ENCODE measurements at regions of chr10 and their contacts with region 1.

Region 1: DNA sequence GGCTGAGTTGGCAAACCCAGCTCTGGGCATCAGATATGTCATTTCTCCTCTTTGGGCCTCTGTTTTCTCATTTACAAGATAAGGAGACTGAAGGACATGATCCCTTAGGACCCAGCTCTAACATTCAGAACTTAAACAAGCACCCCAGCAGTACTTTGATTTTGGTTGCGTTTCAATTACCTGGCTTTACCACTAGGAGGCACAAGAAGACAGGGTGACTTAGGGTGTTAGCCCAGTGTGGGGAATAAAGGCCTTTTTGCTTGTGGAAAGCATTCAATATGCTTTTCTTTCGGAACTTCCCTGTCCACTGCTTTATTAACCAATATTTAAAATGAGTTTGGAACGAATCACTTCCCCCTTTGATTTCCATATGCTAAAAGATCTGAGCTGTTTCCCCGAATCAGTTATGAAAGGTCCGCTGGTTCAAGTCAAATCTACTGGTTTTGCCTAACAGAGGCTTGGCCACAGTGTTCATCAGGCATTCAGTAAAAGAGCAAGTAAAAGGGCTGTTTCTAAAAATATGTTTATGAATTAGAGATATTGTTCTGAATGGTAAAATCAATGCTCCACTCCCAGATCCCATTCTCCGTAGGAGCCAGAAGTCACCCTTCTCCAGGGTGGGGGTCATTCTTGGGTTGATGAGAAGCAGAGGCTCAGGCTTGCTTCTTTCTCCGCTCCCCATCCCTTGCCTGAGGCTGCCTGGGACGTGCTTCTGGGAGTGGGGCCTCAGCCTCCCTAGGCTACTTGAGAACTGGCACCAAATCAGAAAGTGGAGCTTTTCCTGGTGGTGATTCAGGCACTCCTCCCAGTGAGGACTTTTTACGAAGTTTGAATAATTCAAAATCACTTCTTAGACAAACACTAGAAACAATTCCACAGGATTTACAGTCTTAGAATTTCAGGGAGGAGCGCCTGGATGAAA is 105.5 kb downstream of the MYOF start:
- DNase-seq: peak; percentile 42
- H3K4me3 Mint-ChIP-seq: no peak overlapping the region
- H3K27ac Mint-ChIP-seq: no peak overlapping the region
- H3K4me1 Mint-ChIP-seq: peaks cover 39% of the 10 kb centered on the region
- H3K27me3 Mint-ChIP-seq: no peaks in the 10 kb centered on the region

Region 2: GRCh38 chr10:93363891-93364648 is 12.6 kb before region 1 on chr10:
- CTCF ChIA-PET with region 1: interaction called, 27 read pairs
- POLR2A ChIA-PET with region 1: no interaction called
- DNase-seq: no peak
- H3K4me3 Mint-ChIP-seq: no peak overlapping the region
- H3K27ac Mint-ChIP-seq: no peak overlapping the region
- H3K4me1 Mint-ChIP-seq: peaks cover 18% of the 10 kb centered on the region
- H3K27me3 Mint-ChIP-seq: no peaks in the 10 kb centered on the region

Region 3: DNA sequence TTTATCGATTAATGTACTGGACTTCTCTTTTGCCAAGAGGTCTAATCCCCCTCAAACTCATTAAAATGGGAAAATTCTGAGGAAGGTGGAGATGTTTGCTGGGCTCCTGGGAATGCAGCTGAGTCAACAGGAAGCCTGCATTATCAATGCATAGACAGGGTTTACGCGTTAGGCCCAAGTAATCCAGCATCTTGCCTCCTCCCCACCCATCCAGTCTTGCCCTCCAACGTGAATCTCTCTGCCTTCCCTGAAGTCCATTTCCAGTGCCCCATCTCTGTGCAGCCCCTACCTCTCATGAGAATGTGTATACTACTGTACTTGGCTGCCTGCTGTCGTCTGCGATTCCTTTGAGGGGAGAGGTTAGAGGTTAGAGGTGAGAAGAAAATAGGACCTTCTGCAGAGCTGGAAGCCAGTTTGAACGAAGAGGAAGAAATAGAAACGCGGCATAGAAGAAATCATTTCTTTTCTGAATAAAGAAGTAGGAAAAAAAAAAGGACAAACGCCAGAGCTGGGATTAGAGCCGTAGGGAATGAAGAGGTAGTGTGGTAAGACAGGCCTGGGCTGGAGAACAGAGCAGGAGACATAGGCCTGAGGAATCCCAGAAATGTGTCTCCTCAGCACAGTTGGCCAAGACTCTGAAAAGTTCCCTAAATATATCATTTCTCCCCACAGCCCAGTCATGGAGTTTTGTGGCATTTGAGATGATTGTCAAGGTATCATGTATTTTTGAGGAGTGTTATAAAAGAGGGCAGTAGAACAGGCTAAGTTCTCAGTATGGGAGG is 29.9 kb after region 1 on chr10:
- CTCF ChIA-PET with region 1: interaction called, 22 read pairs
- POLR2A ChIA-PET with region 1: interaction called, 16 read pairs
- DNase-seq: no peak
- H3K4me3 Mint-ChIP-seq: no peak overlapping the region
- H3K27ac Mint-ChIP-seq: no peak overlapping the region
- H3K4me1 Mint-ChIP-seq: peaks cover 19% of the 10 kb centered on the region
- H3K27me3 Mint-ChIP-seq: no peaks in the 10 kb centered on the region

Region 4: DNA sequence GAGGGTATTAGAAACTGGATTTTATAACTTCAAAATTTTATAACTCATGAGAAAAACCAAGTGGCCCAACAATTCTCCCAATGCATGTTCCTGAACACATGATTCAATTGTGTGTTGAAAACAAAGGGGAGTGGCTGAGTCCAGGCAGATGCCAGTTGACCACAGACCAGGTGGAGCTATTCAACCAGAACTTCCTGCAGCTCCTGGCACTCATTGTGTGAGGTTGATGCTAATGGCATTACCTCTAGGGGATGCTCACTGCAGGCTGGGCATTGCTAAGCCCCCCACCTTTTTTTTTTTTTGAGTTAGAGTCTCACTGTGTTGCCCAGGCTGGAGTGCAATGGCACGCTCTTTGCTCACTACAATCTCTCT is 85.2 kb after region 1 on chr10:
- CTCF ChIA-PET with region 1: interaction called, 22 read pairs
- POLR2A ChIA-PET with region 1: interaction called, 12 read pairs
- DNase-seq: peak; percentile 37
- H3K4me3 Mint-ChIP-seq: no peak overlapping the region
- H3K27ac Mint-ChIP-seq: peak overlapping the region; percentile 85
- H3K4me1 Mint-ChIP-seq: peaks cover 48% of the 10 kb centered on the region
- H3K27me3 Mint-ChIP-seq: no peaks in the 10 kb centered on the region

Region 5: DNA sequence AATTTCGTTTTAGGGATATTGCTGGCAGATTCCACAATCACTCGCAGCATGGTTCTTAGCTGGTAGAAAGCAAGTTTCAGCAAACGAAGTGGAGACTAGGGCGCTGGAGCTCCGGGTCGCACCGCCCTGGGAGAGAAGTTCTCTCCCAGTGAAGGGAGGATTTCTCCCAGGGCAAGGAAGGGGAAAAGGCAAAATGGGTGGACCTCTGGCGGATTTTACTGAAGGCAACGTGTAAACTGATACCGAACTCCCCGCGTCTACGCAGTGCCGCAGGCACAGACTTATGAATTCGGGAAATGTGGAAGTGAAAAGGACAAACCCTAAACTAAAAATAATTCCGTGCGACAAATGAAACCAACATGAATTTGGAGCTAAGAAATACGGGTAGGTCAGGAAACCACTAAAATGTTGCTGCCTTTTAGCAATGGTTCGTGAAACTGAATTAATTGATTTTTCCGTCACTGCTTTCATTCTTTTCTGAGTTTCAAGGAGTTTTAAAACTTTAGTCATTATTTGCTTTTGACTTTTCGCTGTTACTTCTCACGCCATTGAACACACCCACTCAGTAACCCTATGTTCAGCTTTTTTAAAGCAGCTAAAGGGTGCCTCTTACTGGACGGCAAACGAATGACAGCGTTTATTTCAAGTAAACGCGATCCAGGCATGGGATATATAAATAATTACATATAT is 105.7 kb after region 1 on chr10 and contains the start of gene MYOF:
- CTCF ChIA-PET with region 1: interaction called, 511 read pairs
- POLR2A ChIA-PET with region 1: interaction called, 82 read pairs
- DNase-seq: peak; percentile 67
- H3K4me3 Mint-ChIP-seq: peak within 1 kb of the TSS; percentile 86
- H3K27ac Mint-ChIP-seq: peak within 1 kb of the TSS; percentile 90
- H3K4me1 Mint-ChIP-seq: peaks cover 29% of the 10 kb centered on the region
- H3K27me3 Mint-ChIP-seq: no peaks in the 10 kb centered on the region
- total RNA-seq, gene MYOF: 10.8 to 10.9 TPM

Region 6: DNA sequence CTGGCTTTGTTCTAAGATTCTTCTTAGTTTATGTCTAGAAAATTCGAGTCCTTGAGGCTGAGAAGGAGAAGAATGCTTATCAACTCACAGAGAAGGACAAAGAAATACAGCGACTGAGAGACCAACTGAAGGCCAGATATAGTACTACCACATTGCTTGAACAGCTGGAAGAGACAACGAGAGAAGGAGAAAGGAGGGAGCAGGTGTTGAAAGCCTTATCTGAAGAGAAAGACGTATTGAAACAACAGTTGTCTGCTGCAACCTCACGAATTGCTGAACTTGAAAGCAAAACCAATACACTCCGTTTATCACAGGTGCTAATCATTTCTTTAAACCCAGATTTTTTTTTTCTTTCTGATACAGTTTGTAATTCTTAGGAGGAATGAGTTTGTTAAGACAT is 126.4 kb after region 1 on chr10:
- CTCF ChIA-PET with region 1: interaction called, 114 read pairs
- POLR2A ChIA-PET with region 1: interaction called, 4 read pairs
- DNase-seq: no peak
- H3K4me3 Mint-ChIP-seq: peak overlapping the region; percentile 67
- H3K27ac Mint-ChIP-seq: peak overlapping the region; percentile 87
- H3K4me1 Mint-ChIP-seq: peaks cover 72% of the 10 kb centered on the region
- H3K27me3 Mint-ChIP-seq: no peaks in the 10 kb centered on the region